ENCODE measurements at regions of chr10 and their contacts with region 1.

Region 1: GRCh38 chr10:87734987-87735827 is 75.5 kb downstream of the PAPSS2 start:
- ATAC-seq: peak; percentile 32 to 90 (median 69)
- H3K4me3 ChIP-seq: no peak overlapping the region
- H3K27ac ChIP-seq: no peak overlapping the region
- H3K4me1 ChIP-seq: no peaks in the 10 kb centered on the region

Region 2: GRCh38 chr10:87585565-87586514 is 149.4 kb before region 1 on chr10:
- in situ Hi-C with region 1: no loop called
- ATAC-seq: peak in 1 of 8 experiments; percentile 49
- H3K4me3 ChIP-seq: no peak overlapping the region
- H3K27ac ChIP-seq: no peak overlapping the region
- H3K4me1 ChIP-seq: no peaks in the 10 kb centered on the region

Region 3: DNA sequence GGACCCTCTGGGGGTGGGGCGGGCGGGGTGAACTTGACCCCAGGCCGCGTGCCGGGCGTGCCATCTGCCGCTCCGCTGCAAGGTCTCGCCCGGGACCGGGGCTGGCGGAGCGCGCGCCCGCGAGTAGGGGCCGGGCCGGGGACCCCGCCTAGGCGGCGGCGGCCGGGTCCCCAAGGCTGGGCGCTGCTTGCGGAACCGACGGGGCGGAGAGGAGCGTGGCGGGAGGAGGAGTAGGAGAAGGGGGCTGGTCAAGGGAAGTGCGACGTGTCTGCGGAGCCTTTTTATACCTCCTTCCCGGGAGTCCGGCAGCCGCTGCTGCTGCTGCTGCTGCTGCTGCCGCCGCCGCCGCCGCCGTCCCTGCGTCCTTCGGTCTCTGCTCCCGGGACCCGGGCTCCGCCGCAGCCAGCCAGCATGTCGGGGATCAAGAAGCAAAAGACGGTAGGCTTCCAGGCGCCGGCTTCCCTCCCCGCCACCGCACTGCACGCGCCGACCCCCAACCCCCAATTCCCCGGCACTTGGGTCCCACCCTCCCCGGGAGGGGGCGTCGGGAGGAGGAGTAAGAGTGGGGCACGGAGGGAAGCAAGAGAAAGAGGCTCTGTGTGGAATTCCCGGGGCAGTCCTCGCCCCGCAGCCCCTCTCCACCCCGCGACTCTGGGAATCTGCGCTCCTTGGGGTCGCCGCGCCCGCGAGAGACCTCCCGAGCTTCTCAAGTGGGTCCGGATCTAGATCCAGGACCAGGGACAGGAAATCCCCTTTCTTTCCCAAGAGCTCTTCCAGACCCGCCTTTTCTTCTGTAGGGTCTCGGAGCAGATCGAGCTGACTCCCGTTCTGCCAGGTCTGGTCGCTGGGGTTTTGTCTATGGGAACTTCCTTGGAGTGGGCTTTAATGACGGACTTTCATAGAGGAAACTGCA is 75.4 kb before region 1 on chr10 and contains the start of gene PAPSS2:
- in situ Hi-C with region 1: loop called in 2 of 9 experiments (anchors 10 kb)
- ATAC-seq: peak; percentile 74 to 83 (median 79)
- H3K4me3 ChIP-seq: peak within 1 kb of the TSS; percentile 52 to 90 (median 63)
- H3K27ac ChIP-seq: no peak within 1 kb of the TSS
- H3K4me1 ChIP-seq: peaks cover 0 to 2% of the 10 kb centered on the region in 2 donors
- total RNA-seq, gene PAPSS2: 0.75 to 60.6 (median 7.3) TPM

Region 4: GRCh38 chr10:87887548-87888289 is 152.5 kb after region 1 on chr10:
- in situ Hi-C with region 1: no loop called
- ATAC-seq: no peak
- H3K4me3 ChIP-seq: no peak overlapping the region
- H3K27ac ChIP-seq: no peak overlapping the region
- H3K4me1 ChIP-seq: no peaks in the 10 kb centered on the region

Measured in motor neuron (in vitro differentiated cells).